ENCODE measurements at regions of chr9 and their contacts with region 1.

Region 1: GRCh38 chr9:75448281-75448680 is 360.0 kb downstream of the OSTF1 start:
- DNase-seq: no peak
- ATAC-seq: peak; percentile 54 to 83

Region 2: DNA sequence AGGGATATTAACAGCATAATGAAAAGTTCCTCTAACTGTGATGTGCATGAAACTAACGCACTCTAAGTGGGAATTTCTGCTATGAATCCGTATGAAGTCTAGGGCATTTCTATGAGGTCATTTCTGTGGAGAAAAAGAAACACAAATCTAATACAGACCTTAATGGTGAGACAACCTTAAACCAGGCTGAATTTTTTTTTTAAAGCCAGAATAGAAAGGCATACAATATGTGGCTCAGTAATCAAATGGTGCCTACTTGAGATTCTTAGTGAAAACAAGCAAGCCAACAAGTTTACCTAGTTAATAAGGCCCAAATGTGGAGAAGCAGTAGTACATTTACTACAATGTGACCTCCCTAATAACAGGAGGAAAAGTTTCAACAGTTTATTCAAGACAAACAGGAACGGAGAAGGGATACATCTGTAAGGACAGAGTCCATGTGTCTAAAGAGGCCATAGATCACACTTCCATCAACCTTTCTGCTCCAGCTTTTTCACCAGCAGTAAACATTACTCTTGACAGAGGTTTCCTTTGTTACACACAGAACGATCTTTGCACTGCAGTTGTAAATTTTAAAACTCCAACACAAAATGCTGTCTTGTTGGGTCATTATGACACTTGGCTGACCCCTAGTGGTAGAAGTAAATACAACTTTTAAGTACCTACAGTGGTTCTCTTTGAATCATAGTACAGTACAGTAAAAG is 446.4 kb before region 1 on chr9:
- intact Hi-C with region 1: no loop called
- DNase-seq: no peak
- ATAC-seq: peak; percentile 78 to 86

Region 3: GRCh38 chr9:75591972-75592371 is 143.7 kb after region 1 on chr9:
- intact Hi-C with region 1: loop called in 1 of 2 experiments (anchors 10 kb)
- DNase-seq: no peak
- ATAC-seq: peak; percentile 26 to 27